HAP-1 (cell line): ENCODE measurements at regions of chr4 and their contacts with region 1.

Region 1: DNA sequence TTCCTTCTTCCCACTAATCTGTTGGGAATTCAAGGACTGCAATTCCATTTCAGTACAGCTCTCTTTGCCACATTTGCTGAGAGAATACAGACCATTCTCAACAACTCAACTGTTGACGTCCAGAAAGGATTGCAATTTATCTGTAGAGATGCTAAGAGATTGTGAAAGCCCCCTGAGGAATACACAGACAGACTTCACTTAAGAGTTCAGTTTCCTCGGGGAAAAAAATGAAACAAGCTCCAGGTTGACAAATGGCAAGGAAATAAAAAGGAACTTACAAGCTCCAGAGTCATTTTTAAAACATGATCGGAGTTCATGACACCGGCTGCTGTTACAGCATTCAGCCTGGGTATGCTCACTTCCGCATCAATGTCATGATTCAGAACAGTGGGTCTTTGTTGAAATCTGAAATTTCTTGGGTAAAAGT is 13.8 kb downstream of the TLR10 start:
- DNase-seq: no peak
- H3K4me3 ChIP-seq: no peak overlapping the region
- H3K4me1 ChIP-seq: no peaks in the 10 kb centered on the region
- H3K27me3 ChIP-seq: no peaks in the 10 kb centered on the region

Region 2: DNA sequence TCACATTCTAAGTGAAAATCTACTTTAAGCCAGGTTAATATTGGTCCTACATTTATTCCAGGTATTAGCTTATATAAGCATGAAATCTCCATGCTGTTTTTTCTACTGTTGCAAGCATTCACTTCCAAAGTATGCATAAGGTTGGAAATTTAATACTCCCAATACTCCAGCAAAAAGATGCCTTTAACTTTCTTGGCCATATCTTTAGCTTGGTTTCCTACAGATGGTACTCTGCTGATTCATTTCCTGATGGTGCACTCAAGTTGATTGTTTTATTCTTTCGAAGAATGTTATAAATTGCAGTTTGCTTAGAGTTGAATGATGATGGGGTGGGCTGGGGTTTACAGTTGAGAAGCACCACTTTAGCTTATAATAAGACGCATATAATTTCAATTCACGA is 478.6 kb before region 1 on chr4:
- in situ Hi-C with region 1: no loop called
- DNase-seq: no peak
- H3K4me3 ChIP-seq: no peak overlapping the region
- H3K4me1 ChIP-seq: no peaks in the 10 kb centered on the region
- H3K27me3 ChIP-seq: no peaks in the 10 kb centered on the region

Region 3: DNA sequence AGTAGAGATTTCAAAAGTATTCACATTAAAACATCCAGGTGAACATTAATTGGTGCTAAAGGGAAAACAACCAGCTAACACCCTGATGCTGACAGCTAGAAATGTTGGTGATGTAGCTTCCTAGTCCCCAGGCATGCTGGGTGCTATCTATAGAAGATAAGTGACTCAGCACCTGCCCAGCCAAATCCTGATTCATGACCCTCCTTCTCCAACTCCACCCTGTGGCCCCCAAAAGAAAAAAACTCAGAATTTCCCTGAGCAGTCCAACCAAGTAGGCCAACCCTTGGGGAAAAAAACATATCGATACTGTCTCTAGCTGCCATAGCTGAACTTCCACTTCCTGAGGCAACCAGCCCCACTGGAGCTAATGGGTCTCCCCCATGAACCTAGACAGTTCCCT is 302.6 kb before region 1 on chr4:
- in situ Hi-C with region 1: no loop called
- DNase-seq: no peak
- H3K4me3 ChIP-seq: no peak overlapping the region
- H3K4me1 ChIP-seq: no peaks in the 10 kb centered on the region
- H3K27me3 ChIP-seq: no peaks in the 10 kb centered on the region

Region 4: GRCh38 chr4:38509551-38509950 is 259.4 kb before region 1 on chr4:
- in situ Hi-C with region 1: no loop called
- DNase-seq: no peak
- H3K4me3 ChIP-seq: no peak overlapping the region
- H3K4me1 ChIP-seq: no peaks in the 10 kb centered on the region
- H3K27me3 ChIP-seq: no peaks in the 10 kb centered on the region

Region 5: GRCh38 chr4:38842994-38843393 is 74.0 kb after region 1 on chr4:
- in situ Hi-C with region 1: loop called (anchors 10 kb)
- DNase-seq: peak in 1 of 2 experiments; percentile 17
- H3K4me3 ChIP-seq: no peak overlapping the region
- H3K4me1 ChIP-seq: no peaks in the 10 kb centered on the region
- H3K27me3 ChIP-seq: no peaks in the 10 kb centered on the region; the same call in 1 of the 2 replicates

Region 6: DNA sequence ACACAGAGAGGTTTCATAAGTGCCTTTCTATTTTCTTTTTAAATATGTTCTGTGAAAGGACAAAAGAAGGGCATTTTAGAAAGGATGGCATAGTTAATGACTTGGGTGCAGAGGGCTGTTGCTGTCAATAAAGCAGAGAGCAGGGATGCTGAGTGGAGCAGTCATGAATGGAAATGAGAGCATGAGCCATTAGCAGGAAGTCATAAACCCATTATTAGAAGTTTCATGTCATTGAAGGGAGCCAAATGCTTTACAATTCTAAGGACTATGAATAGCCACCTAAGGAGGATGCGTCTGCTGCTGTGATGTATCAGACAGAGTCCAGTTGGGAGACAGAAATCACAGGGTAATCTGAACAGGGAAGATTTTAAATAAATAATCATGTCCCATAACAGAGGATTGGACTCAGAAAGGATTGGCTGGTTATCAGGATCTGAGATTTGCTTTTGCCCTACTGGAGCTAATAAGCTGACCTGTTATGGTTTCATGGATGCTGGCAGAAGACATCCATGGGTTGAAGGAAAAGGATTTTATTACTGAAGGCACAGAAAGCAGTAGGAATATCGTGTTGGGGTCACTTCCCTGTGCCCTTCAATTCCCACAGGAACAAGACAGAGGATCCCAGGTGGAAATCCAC is 365.8 kb after region 1 on chr4:
- in situ Hi-C with region 1: loop called (anchors 10 kb)
- DNase-seq: peak in 1 of 2 experiments; percentile 2
- H3K4me3 ChIP-seq: no peak overlapping the region
- H3K4me1 ChIP-seq: no peaks in the 10 kb centered on the region; the same call in 1 of the 2 replicates
- H3K27me3 ChIP-seq: no peaks in the 10 kb centered on the region